Ascending aorta (tissue), 2 donors: ENCODE measurements at regions of chr3 and their contacts with region 1.

Region 1: GRCh38 chr3:51384726-51385473 is at the start of gene MANF:
- DNase-seq: peak; percentile 97 to 99
- H3K4me3 ChIP-seq: peak within 1 kb of the TSS; percentile 92
- H3K27ac ChIP-seq: peak within 1 kb of the TSS; percentile 92 to 98
- H3K4me1 ChIP-seq: peaks cover 5 to 28% of the 10 kb centered on the region in 2 donors
- H3K27me3 ChIP-seq: no peaks in the 10 kb centered on the region
- CTCF ChIP-seq: peak in 1 of 3 experiments; percentile 37
- total RNA-seq, gene MANF: 34.4 TPM

Region 2: DNA sequence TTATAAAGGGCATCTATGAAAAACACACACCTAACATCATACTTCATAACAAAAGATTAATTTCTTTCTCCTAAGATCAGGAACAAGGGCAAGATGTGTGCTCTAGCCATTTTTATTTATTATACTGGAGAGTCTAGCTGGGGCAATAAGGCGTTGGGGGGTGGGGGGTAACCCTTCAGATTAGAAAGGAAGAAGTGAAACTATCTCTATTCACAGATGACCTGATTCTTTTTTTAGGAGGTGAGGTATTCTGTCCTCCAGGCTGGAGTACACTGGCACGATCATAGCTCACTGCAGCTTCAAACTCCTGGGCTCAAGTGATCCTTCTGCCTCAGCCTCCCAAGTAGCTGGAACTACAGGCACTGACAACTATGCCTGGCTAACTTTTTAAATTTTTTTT is 89.3 kb before region 1 on chr3:
- intact Hi-C with region 1: no loop called
- DNase-seq: no peak
- H3K4me3 ChIP-seq: no peak overlapping the region
- H3K27ac ChIP-seq: no peak overlapping the region
- H3K4me1 ChIP-seq: no peaks in the 10 kb centered on the region
- H3K27me3 ChIP-seq: no peaks in the 10 kb centered on the region
- CTCF ChIP-seq: no peak

Region 3: DNA sequence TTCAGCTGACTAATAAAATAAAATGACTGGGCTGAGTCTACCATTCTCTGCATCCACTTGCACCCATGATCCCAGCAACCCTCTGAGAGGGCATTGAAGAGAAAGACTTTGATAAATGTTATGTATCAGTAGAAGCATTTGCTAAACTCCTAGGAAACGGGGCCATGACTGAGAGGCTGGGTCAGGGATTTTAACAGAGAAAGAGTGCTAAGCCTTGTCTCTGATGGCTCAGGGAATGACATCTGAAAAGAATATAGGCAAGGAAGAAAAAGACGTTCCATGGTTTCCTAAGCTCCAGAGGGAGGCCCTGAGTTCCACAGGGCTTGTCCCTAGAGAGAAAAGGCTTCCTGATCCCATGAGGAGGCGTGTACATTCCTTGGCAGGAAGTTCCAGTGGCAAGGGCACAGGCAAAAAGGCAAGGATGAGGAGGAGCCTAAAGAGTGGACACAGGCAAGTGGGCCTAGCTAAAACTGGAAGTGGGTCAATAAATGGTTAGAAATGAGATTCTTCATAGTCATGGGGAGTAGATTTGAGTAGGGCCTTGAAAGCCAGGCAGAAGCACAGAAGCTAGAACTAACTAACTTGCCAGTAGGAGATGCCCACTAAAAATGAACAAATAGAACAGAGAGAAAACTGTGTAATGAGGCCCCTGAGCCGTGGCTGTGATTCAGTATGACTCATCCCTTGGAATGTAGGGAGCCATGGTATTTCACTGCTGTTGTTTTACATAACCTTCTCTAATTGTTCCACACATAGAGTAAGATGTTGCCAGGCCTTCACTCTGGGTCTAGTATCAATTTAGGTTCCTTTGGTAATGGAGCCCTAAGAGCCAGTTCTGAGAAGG is 44.7 kb before region 1 on chr3:
- intact Hi-C with region 1: loop called (anchors 2 kb)
- DNase-seq: peak in 1 of 2 donors; percentile 76
- H3K4me3 ChIP-seq: no peak overlapping the region
- H3K27ac ChIP-seq: peak overlapping the region; percentile 87 to 90
- H3K4me1 ChIP-seq: peaks cover 9 to 22% of the 10 kb centered on the region in 2 donors
- H3K27me3 ChIP-seq: no peaks in the 10 kb centered on the region
- CTCF ChIP-seq: no peak

Region 4: GRCh38 chr3:51670823-51671733 is 286.2 kb after region 1 on chr3 and contains the start of gene TEX264:
- intact Hi-C with region 1: loop called (anchors 2 kb)
- DNase-seq: peak; percentile 56 to 94
- H3K4me3 ChIP-seq: peak within 1 kb of the TSS; percentile 88 to 91
- H3K27ac ChIP-seq: peak within 1 kb of the TSS; percentile 83 to 89
- H3K4me1 ChIP-seq: peaks cover 5 to 14% of the 10 kb centered on the region in 2 donors
- H3K27me3 ChIP-seq: no peaks in the 10 kb centered on the region
- CTCF ChIP-seq: no peak
- total RNA-seq, gene TEX264: 69.1 TPM